Calu3 (cell line): ENCODE measurements at regions of chr14 and their contacts with region 1.

Region 1: GRCh38 chr14:24734878-24735500 is 101.0 kb upstream of the GZMB start:
- DNase-seq: peak; percentile 51
- H3K4me3 Mint-ChIP-seq: no peak overlapping the region
- H3K27ac Mint-ChIP-seq: no peak overlapping the region
- H3K4me1 Mint-ChIP-seq: no peaks in the 10 kb centered on the region
- H3K27me3 Mint-ChIP-seq: peaks cover 28% of the 10 kb centered on the region
- CTCF ChIP-seq: no peak

Region 2: GRCh38 chr14:25132732-25133422 is 397.9 kb after region 1 on chr14:
- CTCF ChIA-PET with region 1: no interaction called
- intact Hi-C with region 1: loop called (anchors 5 kb)
- DNase-seq: peak; percentile 76
- H3K4me3 Mint-ChIP-seq: peak overlapping the region; percentile 61
- H3K27ac Mint-ChIP-seq: peak overlapping the region; percentile 55
- H3K4me1 Mint-ChIP-seq: peaks cover 18% of the 10 kb centered on the region
- H3K27me3 Mint-ChIP-seq: peaks cover 12% of the 10 kb centered on the region
- CTCF ChIP-seq: peak; percentile 65

Region 3: GRCh38 chr14:25150934-25151790 is 416.2 kb after region 1 on chr14:
- CTCF ChIA-PET with region 1: no interaction called
- intact Hi-C with region 1: loop called (anchors 1 kb)
- DNase-seq: no peak
- H3K4me3 Mint-ChIP-seq: no peak overlapping the region
- H3K27ac Mint-ChIP-seq: no peak overlapping the region
- H3K4me1 Mint-ChIP-seq: peaks cover 5% of the 10 kb centered on the region
- H3K27me3 Mint-ChIP-seq: peaks cover 18% of the 10 kb centered on the region
- CTCF ChIP-seq: peak; percentile 21

Region 4: GRCh38 chr14:25237845-25238244 is 502.9 kb after region 1 on chr14:
- CTCF ChIA-PET with region 1: no interaction called
- intact Hi-C with region 1: loop called (anchors 2 kb)
- DNase-seq: peak; percentile 18
- H3K4me3 Mint-ChIP-seq: no peak overlapping the region
- H3K27ac Mint-ChIP-seq: no peak overlapping the region
- H3K4me1 Mint-ChIP-seq: peaks cover 9% of the 10 kb centered on the region
- H3K27me3 Mint-ChIP-seq: no peaks in the 10 kb centered on the region
- CTCF ChIP-seq: no peak

Region 5: DNA sequence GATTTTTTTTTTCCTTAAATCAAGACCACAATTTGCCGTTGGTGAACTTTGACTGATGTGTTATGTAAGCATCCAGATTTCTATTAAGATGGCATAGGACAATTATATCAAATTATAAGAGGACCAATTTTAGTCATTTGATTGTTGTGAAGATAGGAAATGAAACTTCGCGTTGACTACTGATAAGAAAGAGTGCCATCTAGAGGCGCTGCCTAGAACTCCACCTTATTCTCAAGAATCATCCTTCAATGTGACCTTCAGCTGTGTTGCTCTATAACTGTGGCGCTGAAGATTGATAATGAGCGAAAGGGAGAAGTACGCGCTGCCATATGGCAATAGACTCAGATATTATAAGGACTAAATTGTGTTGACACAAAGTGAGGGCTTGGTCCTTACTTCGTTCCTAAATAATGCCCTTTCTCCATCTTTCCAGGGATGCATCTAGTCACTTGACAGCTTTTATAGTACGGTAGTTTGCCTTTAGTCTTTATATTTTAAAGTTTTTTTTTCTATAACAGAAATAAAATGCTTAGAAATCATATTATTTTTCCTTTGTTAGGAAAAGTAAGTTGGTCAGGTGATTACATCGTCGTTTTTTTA is 665.7 kb after region 1 on chr14:
- CTCF ChIA-PET with region 1: no interaction called
- intact Hi-C with region 1: loop called (anchors 1 kb)
- DNase-seq: peak; percentile 40
- H3K4me3 Mint-ChIP-seq: no peak overlapping the region
- H3K27ac Mint-ChIP-seq: no peak overlapping the region
- H3K4me1 Mint-ChIP-seq: no peaks in the 10 kb centered on the region
- H3K27me3 Mint-ChIP-seq: no peaks in the 10 kb centered on the region
- CTCF ChIP-seq: peak; percentile 50